Colonic mucosa (tissue), 4 donors: ENCODE measurements at regions of chr1 and their contacts with region 1.

Region 1: GRCh38 chr1:203038891-203039608 is 12.8 kb downstream of the PPFIA4 start:
- DNase-seq: peak; percentile 71
- H3K4me3 ChIP-seq: no peak overlapping the region
- H3K27ac ChIP-seq: no peak overlapping the region
- H3K4me1 ChIP-seq: no peaks in the 10 kb centered on the region
- H3K27me3 ChIP-seq: no peaks in the 10 kb centered on the region
- CTCF ChIP-seq: peak; percentile 93

Region 2: GRCh38 chr1:203172128-203173010 is 133.3 kb after region 1 on chr1:
- intact Hi-C with region 1: loop called (anchors 2 kb)
- DNase-seq: peak; percentile 67
- H3K4me3 ChIP-seq: no peak overlapping the region
- H3K27ac ChIP-seq: no peak overlapping the region
- H3K4me1 ChIP-seq: no peaks in the 10 kb centered on the region
- H3K27me3 ChIP-seq: no peaks in the 10 kb centered on the region
- CTCF ChIP-seq: peak; percentile 83

Region 3: GRCh38 chr1:203216274-203217138 is 177.5 kb after region 1 on chr1:
- intact Hi-C with region 1: loop called (anchors 1 kb)
- DNase-seq: peak; percentile 68
- H3K4me3 ChIP-seq: no peak overlapping the region
- H3K27ac ChIP-seq: no peak overlapping the region
- H3K4me1 ChIP-seq: no peaks in the 10 kb centered on the region
- H3K27me3 ChIP-seq: no peaks in the 10 kb centered on the region
- CTCF ChIP-seq: peak; percentile 63

Region 4: GRCh38 chr1:203267347-203267846 is 228.3 kb after region 1 on chr1:
- intact Hi-C with region 1: loop called (anchors 5 kb)
- DNase-seq: peak; percentile 92
- H3K4me3 ChIP-seq: peak overlapping the region; percentile 29
- H3K27ac ChIP-seq: peak overlapping the region; percentile 39
- H3K4me1 ChIP-seq: no peaks in the 10 kb centered on the region
- H3K27me3 ChIP-seq: no peaks in the 10 kb centered on the region
- CTCF ChIP-seq: peak; percentile 89

Region 5: GRCh38 chr1:203448521-203449061 is 409.5 kb after region 1 on chr1:
- intact Hi-C with region 1: no loop called
- DNase-seq: no peak
- H3K4me3 ChIP-seq: no peak overlapping the region
- H3K27ac ChIP-seq: no peak overlapping the region
- H3K4me1 ChIP-seq: no peaks in the 10 kb centered on the region
- H3K27me3 ChIP-seq: no peaks in the 10 kb centered on the region
- CTCF ChIP-seq: no peak